A673 (cell line): ENCODE measurements at regions of chr13 and their contacts with region 1.

Region 1: DNA sequence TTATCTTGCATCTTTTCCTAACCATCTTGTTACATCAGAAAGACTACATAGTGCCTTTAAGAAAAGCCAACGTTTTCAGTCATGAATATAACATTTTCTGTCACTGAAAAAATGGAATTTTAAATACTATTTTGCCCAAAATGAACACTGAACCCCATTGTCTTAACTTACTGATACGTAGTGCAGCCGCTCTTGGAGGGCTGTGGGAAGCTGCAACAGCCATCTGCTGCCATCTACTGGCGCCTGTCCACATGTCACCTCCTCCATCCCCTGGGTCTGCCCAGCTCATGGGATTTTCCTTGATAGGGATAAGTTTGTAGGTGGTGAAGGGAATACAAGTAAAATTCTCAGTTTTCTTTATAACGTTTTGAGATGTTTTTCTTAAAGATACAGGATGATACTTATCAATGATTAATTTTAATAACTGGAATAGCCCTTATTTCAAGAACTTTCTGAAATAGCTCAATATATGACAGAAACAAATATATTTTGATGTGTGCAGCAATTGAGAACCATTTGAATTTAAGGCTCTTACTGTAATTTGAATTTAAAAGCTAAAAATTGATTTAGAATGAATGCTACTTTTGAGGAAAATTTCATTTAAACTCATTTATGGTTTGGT is 73.7 kb downstream of the GGACT start:
- DNase-seq: peak; percentile 94
- H3K4me3 ChIP-seq: peak overlapping the region; percentile 9
- H3K27ac ChIP-seq: peak overlapping the region; percentile 80
- H3K4me1 ChIP-seq: peaks cover 99% of the 10 kb centered on the region
- H3K27me3 ChIP-seq: no peaks in the 10 kb centered on the region
- CTCF ChIP-seq: peak; percentile 98

Region 2: DNA sequence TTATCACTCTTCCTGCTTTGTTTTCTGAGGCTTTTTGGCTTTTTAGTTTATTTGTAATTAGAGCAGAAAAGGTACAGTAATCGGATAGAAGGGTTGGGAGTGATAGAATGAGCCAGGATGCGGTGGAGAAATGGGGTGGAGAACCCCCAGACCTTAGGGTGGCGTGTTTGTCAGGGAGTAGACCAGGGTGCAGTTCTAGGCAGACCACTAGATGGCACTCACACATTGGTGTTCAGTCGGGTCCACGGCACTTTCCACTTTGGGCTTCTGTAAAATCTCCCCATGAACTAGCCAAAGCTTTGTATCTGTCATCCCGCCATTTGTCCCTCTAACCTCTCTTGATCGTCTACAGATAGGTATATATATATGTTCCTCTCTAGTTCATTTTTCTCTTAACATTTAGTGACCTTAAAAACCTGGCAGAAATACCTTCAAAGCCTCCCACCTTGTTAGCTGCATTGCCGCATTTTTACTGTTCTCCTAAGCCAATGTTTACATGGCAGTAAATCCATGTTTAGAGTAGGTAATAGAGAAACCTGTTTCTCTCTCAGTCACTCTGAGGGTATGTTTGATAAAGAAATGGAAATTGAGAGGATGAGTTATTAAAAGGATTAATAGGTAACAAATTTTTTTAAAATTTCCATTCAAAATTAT is 858.7 kb before region 1 on chr13:
- CTCF ChIA-PET with region 1: interaction called, 3 read pairs
- POLR2A ChIA-PET with region 1: no interaction called
- intact Hi-C with region 1: loop called (anchors 2 kb)
- DNase-seq: peak; percentile 89
- H3K4me3 ChIP-seq: peak overlapping the region; percentile 49
- H3K27ac ChIP-seq: peak overlapping the region; percentile 90
- H3K4me1 ChIP-seq: peaks cover 41% of the 10 kb centered on the region
- H3K27me3 ChIP-seq: no peaks in the 10 kb centered on the region
- CTCF ChIP-seq: peak; percentile 95

Region 3: DNA sequence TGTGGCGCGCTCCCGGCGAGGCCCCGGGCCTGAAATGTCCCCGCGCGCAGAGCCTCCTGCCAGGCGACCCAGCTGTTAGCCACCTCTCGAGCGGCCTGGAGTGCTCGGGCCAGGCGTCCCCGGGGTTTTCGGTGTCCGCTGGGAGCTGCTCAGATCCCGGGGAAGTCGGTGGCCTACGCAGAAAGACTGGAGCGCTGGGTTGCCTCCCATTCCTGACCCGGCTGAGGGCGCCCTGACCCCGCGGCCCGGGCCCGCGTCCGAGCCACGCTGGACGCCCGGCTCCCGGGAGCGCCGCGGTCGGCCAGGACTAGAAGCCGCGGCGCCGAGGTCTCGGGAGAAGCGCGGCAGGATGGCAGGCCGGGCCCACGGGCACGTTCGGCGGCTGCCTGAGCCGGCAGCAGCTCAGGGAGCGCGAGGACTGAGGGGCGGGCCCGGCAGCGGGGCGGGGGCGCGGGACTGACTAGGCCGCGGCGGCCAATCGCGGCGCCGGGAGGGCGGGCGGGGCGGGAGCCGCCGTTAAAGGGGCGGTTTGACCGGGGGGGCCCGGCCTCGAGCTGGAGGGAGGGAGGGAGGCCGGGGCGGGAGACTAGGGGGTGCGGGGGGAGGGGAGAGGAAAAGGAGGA is 534.6 kb before region 1 on chr13:
- CTCF ChIA-PET with region 1: no interaction called
- POLR2A ChIA-PET with region 1: interaction called, 3 read pairs
- intact Hi-C with region 1: loop called (anchors 1 kb)
- DNase-seq: peak; percentile 96
- H3K4me3 ChIP-seq: peak overlapping the region; percentile 95
- H3K27ac ChIP-seq: peak overlapping the region; percentile 97
- H3K4me1 ChIP-seq: peaks cover 5% of the 10 kb centered on the region
- H3K27me3 ChIP-seq: no peaks in the 10 kb centered on the region
- CTCF ChIP-seq: no peak

Region 4: GRCh38 chr13:100235311-100235901 is 279.5 kb before region 1 on chr13:
- CTCF ChIA-PET with region 1: no interaction called
- POLR2A ChIA-PET with region 1: no interaction called
- intact Hi-C with region 1: loop called (anchors 2 kb)
- DNase-seq: peak; percentile 99
- H3K4me3 ChIP-seq: peak overlapping the region; percentile 27
- H3K27ac ChIP-seq: peak overlapping the region; percentile 82
- H3K4me1 ChIP-seq: peaks cover 59% of the 10 kb centered on the region
- H3K27me3 ChIP-seq: no peaks in the 10 kb centered on the region
- CTCF ChIP-seq: peak; percentile 73

Region 5: GRCh38 chr13:100440751-100441425 is 74.0 kb before region 1 on chr13:
- CTCF ChIA-PET with region 1: no interaction called
- POLR2A ChIA-PET with region 1: no interaction called
- intact Hi-C with region 1: loop called (anchors 5 kb)
- DNase-seq: no peak
- H3K4me3 ChIP-seq: no peak overlapping the region
- H3K27ac ChIP-seq: peak overlapping the region; percentile 41
- H3K4me1 ChIP-seq: peaks cover 26% of the 10 kb centered on the region
- H3K27me3 ChIP-seq: no peaks in the 10 kb centered on the region
- CTCF ChIP-seq: no peak